HCT116 (cell line): ENCODE measurements at regions of chr3 and their contacts with region 1.

Region 1: GRCh38 chr3:49906004-49906743 is 2.5 kb upstream of the MST1R start:
- DNase-seq: peak; percentile 55
- ATAC-seq: peak; percentile 54
- H3K4me3 ChIP-seq: peak overlapping the region; percentile 75 to 79
- H3K27ac ChIP-seq: peak overlapping the region; percentile 89
- H3K4me1 ChIP-seq: peaks cover 40 to 52% of the 10 kb centered on the region in 2 experiments
- H3K27me3 ChIP-seq: no peaks in the 10 kb centered on the region
- CTCF ChIP-seq: peak in 2 of 3 experiments; percentile 81 to 88; a peak in 4 of 6 replicates
- POLR2A ChIP-seq: no peak
- RAD21 ChIP-seq: no peak

Region 2: DNA sequence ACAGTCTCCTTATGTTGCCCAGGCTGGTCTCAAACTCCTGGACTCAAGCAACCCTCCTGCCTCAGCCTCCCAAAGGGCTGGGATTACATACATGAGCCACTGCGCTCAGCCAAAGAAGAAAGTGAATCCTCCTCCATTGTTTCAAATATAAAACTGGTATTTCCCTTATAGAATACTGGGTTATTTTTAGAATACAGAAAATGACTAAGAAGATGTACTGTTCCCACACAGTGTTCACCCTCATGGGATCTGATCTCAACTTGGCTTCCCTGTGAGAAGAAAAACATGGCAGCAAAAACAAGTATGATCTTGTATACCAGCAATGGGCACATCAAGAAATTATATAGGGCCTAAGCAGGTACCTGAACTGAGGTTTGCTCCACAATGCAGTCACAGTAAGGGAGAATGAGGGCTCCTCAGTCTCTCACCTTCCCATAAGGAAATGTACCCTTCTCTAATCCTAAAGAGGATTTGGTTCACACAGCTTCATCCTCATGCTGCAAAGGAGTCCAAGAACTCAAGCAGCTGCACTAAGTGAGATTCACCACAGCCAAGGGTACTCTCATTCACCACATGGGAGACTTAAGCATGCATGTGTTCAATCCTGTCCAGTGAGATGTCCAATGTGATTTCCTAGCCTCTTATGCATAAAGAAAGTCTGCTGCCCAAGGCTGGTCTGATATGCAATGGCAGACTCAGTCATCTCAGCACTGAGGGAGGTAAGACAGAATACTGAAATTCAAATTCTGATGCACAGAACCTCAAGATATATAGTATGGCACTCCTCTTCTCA is 592.1 kb before region 1 on chr3:
- CTCF ChIA-PET with region 1: no interaction called
- POLR2A ChIA-PET with region 1: no interaction called
- RAD21 ChIA-PET with region 1: no interaction called
- intact Hi-C with region 1: no loop called
- DNase-seq: no peak
- ATAC-seq: no peak
- H3K4me3 ChIP-seq: no peak overlapping the region
- H3K27ac ChIP-seq: no peak overlapping the region
- H3K4me1 ChIP-seq: no peaks in the 10 kb centered on the region
- H3K27me3 ChIP-seq: no peaks in the 10 kb centered on the region
- CTCF ChIP-seq: no peak
- POLR2A ChIP-seq: no peak
- RAD21 ChIP-seq: no peak

Region 3: GRCh38 chr3:49703443-49703927 is 202.7 kb before region 1 on chr3:
- CTCF ChIA-PET with region 1: no interaction called
- POLR2A ChIA-PET with region 1: no interaction called
- RAD21 ChIA-PET with region 1: interaction called, 3 read pairs
- intact Hi-C with region 1: loop called (anchors 1 kb)
- DNase-seq: peak; percentile 22
- ATAC-seq: peak; percentile 93
- H3K4me3 ChIP-seq: no peak overlapping the region
- H3K27ac ChIP-seq: peak overlapping the region; percentile 5; the same call in 1 of the 2 replicates
- H3K4me1 ChIP-seq: no peaks in the 10 kb centered on the region
- H3K27me3 ChIP-seq: no peaks in the 10 kb centered on the region
- CTCF ChIP-seq: peak; percentile 76 to 91 (median 76)
- POLR2A ChIP-seq: no peak
- RAD21 ChIP-seq: peak; percentile 90

Region 4: GRCh38 chr3:49802719-49803464 is 103.3 kb before region 1 on chr3 and contains the start of gene INKA1:
- CTCF ChIA-PET with region 1: interaction called, 9 read pairs
- POLR2A ChIA-PET with region 1: interaction called, 3 read pairs
- RAD21 ChIA-PET with region 1: interaction called in 1 of 2 experiments, 4 read pairs
- intact Hi-C with region 1: loop called (anchors 1 kb)
- DNase-seq: peak; percentile 71
- ATAC-seq: peak; percentile 85
- H3K4me3 ChIP-seq: peak within 1 kb of the TSS; percentile 50 to 76
- H3K27ac ChIP-seq: peak within 1 kb of the TSS; percentile 65
- H3K4me1 ChIP-seq: peaks cover 5 to 33% of the 10 kb centered on the region in 2 experiments; a peak in 3 of 4 replicates
- H3K27me3 ChIP-seq: no peaks in the 10 kb centered on the region
- CTCF ChIP-seq: peak; percentile 84 to 94 (median 89); a peak in 5 of 6 replicates
- POLR2A ChIP-seq: peak; percentile 62
- RAD21 ChIP-seq: peak; percentile 92
- total RNA-seq, gene INKA1: 1.6 TPM

Region 5: DNA sequence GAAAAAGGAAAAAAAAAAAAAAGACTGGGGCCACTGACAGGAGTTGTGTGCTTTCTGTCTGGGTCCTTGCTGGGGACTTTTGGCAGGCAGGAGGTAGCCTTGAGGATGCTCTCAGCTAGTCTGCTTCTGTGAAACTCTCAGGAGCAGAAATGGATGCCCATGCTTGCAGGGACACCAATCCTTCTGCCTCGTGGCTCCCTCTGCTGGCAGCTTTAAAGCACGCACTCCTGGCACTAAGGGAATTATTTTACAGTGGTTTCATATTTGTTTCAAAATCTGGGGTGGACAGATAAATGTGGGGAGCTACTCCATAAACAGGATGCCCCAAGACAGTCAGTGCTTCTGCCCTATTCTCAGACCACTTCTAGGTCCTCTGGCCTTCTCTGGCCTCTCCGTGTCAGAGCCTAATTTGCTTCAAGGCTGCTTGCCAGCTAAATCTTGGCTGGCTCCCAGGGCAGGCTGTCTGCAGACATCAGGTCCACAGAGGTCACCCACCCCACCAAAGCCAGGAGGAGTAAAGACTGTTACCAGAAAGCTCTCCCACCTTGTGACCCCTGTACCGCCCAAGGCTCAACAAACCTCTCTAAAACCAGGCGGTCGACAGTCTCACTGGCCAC is 66.9 kb before region 1 on chr3:
- CTCF ChIA-PET with region 1: interaction called, 10 read pairs
- POLR2A ChIA-PET with region 1: no interaction called
- RAD21 ChIA-PET with region 1: no interaction called
- intact Hi-C with region 1: loop called (anchors 1 kb)
- DNase-seq: peak; percentile 44
- ATAC-seq: peak; percentile 80
- H3K4me3 ChIP-seq: no peak overlapping the region
- H3K27ac ChIP-seq: no peak overlapping the region
- H3K4me1 ChIP-seq: peaks cover 4 to 10% of the 10 kb centered on the region in 2 experiments; a peak in 1 of 4 replicates
- H3K27me3 ChIP-seq: no peaks in the 10 kb centered on the region
- CTCF ChIP-seq: peak; percentile 85 to 92 (median 89)
- POLR2A ChIP-seq: no peak
- RAD21 ChIP-seq: peak; percentile 89

Region 6: DNA sequence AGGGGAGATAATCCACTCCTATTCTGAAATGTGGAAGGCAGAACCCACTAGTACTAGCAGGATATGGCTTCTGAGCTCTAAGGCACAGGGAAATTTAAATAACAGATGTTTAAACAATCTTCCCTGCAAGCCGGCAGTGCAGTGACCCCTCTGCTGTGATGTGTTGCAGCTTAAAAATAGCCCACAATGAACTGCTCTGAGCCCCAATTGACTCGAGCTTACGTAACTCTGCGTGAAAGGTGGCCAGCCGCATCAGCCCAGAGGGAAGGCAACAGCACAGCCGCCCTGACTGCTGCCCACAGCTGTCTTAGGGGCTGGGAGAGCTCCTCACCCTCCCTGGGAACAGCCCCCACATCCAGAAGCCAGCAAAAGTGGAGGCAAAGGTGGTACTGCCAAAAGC is 24.0 kb before region 1 on chr3:
- CTCF ChIA-PET with region 1: interaction called, 3 read pairs
- POLR2A ChIA-PET with region 1: interaction called, 43 read pairs
- RAD21 ChIA-PET with region 1: no interaction called
- intact Hi-C with region 1: no loop called
- DNase-seq: no peak
- ATAC-seq: no peak
- H3K4me3 ChIP-seq: no peak overlapping the region
- H3K27ac ChIP-seq: no peak overlapping the region
- H3K4me1 ChIP-seq: peaks cover 0 to 14% of the 10 kb centered on the region in 2 experiments; a peak in 1 of 4 replicates
- H3K27me3 ChIP-seq: no peaks in the 10 kb centered on the region
- CTCF ChIP-seq: no peak
- POLR2A ChIP-seq: no peak
- RAD21 ChIP-seq: no peak

Region 7: GRCh38 chr3:49929331-49930240 is 23.4 kb after region 1 on chr3 and contains the start of gene MON1A:
- CTCF ChIA-PET with region 1: interaction called, 4 read pairs
- POLR2A ChIA-PET with region 1: interaction called, 12 read pairs
- RAD21 ChIA-PET with region 1: no interaction called
- intact Hi-C with region 1: no loop called
- DNase-seq: peak; percentile 67
- ATAC-seq: peak; percentile 86
- H3K4me3 ChIP-seq: peak within 1 kb of the TSS; percentile 52 to 68
- H3K27ac ChIP-seq: peak within 1 kb of the TSS; percentile 67
- H3K4me1 ChIP-seq: peaks cover 23 to 43% of the 10 kb centered on the region in 2 experiments
- H3K27me3 ChIP-seq: no peaks in the 10 kb centered on the region
- CTCF ChIP-seq: peak; percentile 32 to 46 (median 32); a peak in 4 of 6 replicates
- POLR2A ChIP-seq: no peak
- RAD21 ChIP-seq: no peak; the same call in 1 of the 2 replicates
- total RNA-seq, gene MON1A: 9.0 TPM